ENCODE measurements at regions of chr6 and their contacts with region 1.

Region 1: DNA sequence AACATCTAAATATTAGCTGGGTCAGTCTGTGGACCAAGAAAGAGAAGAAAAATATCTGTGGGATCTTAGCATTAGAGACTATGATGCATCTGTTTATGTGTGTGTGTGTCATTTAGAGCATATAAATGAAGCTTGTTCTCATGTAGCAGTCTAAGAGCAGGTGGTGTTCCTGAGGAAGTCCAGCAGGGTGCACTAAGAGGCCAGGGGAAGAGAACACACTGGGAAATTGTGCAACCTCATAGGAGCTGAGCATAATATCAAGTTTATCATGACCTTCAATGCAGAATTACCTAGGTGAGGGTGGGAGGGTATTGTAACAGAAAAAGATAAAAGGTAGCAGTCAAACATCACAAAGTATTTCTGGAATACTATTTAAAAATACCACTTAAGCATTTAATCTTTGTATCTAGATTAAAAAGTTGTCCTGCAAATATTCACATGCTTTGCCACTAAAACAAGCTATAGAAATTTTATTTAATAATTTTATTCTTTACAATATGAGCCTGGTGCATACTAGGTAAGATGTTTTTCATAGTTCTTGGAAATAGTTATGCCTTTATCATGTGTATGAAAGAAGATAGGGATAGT is 80.5 kb downstream of the SMPDL3A start:
- DNase-seq: no peak
- H3K4me3 ChIP-seq: no peak overlapping the region
- H3K27me3 ChIP-seq: no peaks in the 10 kb centered on the region
- CTCF ChIP-seq: peak; percentile 53

Region 2: DNA sequence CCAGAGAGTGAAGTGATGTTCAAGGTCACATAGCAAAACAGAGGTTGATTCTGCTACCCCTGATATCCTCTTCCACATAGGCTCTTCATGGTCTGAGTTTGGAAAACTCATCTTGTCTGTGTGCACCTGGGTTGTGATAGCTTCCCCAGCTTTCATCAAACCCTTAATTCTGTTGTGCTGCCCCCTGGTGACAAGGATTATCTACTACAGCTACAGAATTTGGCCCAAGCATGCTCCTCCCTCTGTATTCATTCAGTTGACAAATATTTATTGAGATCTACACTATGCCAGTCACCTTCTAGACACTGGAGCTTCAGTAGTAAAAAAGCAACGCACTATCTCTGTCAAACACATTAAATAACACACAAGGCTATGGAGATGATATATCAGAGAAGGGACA is 30.1 kb before region 1 on chr6:
- CTCF ChIA-PET with region 1: no interaction called
- POLR2A ChIA-PET with region 1: no interaction called
- DNase-seq: no peak
- H3K4me3 ChIP-seq: no peak overlapping the region
- H3K27me3 ChIP-seq: no peaks in the 10 kb centered on the region
- CTCF ChIP-seq: peak; percentile 61

Region 3: GRCh38 chr6:123316733-123317323 is 447.3 kb after region 1 on chr6:
- CTCF ChIA-PET with region 1: interaction called, 14 read pairs
- POLR2A ChIA-PET with region 1: no interaction called
- DNase-seq: no peak
- H3K4me3 ChIP-seq: no peak overlapping the region
- H3K27me3 ChIP-seq: no peaks in the 10 kb centered on the region
- CTCF ChIP-seq: peak; percentile 37; the same call in 1 of the 2 replicates